ENCODE measurements at regions of chr16 and their contacts with region 1.

Region 1: DNA sequence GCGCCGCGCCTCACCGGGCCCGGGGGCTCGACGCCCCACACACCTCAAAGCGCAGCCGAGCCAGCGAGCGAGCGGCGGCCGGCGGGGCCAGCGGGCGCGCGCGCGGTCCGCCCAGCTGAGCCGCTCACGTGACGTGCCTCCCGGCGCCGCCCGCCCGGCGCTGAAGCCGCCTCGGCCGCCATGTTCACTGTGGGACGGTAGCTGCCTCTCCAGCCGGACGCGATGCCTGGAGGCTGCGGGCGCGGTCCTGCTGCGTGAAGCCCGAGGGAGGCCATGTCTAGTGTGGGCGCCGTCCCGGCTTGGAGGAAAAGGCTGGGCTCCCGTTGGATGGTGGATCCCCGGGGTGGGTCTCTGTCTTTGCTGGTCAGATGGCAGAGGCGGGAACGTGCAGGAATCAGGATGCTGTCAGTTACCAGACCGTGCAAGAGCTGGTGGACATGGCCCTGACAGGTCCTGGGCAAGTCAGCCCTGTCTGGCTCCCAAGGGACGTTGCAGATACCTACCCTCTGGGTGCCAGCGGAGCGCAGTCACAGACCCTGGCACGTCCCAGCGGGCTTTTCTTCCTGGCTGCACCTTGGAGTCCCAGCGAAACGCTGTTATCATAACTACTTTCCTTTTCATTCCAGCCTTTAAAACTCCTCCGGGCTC is at the start of gene USP31:
- DNase-seq: peak; percentile 95
- H3K4me3 ChIP-seq: peak within 1 kb of the TSS; percentile 86
- H3K27ac ChIP-seq: no peak within 1 kb of the TSS
- H3K4me1 ChIP-seq: peaks cover 25% of the 10 kb centered on the region
- CTCF ChIP-seq: no peak
- total RNA-seq, gene USP31: 6.8 and 9.0 TPM in 2 replicates

Region 2: GRCh38 chr16:23081675-23082119 is 67.8 kb before region 1 on chr16:
- CTCF ChIA-PET with region 1: no interaction called
- POLR2A ChIA-PET with region 1: no interaction called
- intact Hi-C with region 1: loop called (anchors 10 kb)
- DNase-seq: no peak
- H3K4me3 ChIP-seq: no peak overlapping the region
- H3K27ac ChIP-seq: no peak overlapping the region
- H3K4me1 ChIP-seq: no peaks in the 10 kb centered on the region
- CTCF ChIP-seq: no peak

Region 3: DNA sequence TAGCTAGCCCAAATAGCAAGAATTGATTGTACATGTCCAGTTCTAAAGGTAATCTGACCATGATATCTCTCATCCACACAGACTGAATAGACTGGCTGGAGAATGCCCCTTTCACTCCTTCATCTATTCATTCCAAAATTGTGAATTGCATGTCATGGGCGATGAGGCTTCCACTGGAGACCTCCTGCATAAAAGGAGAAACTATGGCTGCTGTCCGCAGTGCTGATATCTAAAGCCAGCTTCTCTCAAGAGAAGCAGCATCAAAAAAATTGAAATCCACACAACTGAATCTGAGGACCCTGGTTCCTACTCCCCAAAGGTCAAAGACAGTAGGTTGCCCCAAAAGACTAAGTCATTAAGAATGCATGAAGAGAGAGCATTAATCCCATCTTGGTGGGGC is 25.1 kb after region 1 on chr16:
- CTCF ChIA-PET with region 1: no interaction called
- POLR2A ChIA-PET with region 1: no interaction called
- intact Hi-C with region 1: no loop called
- DNase-seq: no peak
- H3K4me3 ChIP-seq: no peak overlapping the region
- H3K27ac ChIP-seq: no peak overlapping the region
- H3K4me1 ChIP-seq: no peaks in the 10 kb centered on the region
- CTCF ChIP-seq: no peak